MCF 10A (cell line): ENCODE measurements at regions of chr7 and their contacts with region 1.

Region 1: DNA sequence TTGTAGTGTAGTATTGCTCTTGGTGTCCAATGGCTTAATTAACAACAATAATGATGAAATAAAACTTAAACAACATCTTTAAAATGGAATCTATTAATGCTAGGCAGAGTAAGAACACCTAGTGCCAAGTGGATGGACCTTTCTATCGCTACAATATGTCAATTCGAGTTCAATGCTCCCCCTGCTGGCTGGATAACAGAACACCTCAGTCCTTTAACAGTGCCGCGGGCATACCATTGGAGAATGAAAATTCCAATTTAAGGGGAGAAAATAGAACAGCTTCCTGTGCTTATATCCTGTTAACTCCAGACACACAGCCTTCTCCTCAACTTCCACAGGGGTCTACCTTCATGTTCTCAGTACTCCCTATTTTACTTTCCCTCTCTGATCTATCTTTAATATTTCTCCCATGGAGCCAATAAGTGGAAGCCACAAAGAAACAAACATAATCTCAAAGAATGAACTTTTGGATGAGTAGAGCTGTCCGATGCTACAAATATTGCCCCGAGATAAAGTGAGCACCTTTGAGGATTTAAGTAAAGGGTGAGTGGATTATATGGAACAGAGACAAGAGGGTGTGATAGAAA is 41.4 kb downstream of the COL1A2 start:
- DNase-seq: peak; percentile 84
- H3K4me3 Mint-ChIP-seq: no peak overlapping the region
- H3K27ac Mint-ChIP-seq: peak overlapping the region; percentile 20
- H3K4me1 Mint-ChIP-seq: peaks cover 6% of the 10 kb centered on the region
- H3K27me3 Mint-ChIP-seq: no peaks in the 10 kb centered on the region
- CTCF ChIP-seq: peak; percentile 86

Region 2: DNA sequence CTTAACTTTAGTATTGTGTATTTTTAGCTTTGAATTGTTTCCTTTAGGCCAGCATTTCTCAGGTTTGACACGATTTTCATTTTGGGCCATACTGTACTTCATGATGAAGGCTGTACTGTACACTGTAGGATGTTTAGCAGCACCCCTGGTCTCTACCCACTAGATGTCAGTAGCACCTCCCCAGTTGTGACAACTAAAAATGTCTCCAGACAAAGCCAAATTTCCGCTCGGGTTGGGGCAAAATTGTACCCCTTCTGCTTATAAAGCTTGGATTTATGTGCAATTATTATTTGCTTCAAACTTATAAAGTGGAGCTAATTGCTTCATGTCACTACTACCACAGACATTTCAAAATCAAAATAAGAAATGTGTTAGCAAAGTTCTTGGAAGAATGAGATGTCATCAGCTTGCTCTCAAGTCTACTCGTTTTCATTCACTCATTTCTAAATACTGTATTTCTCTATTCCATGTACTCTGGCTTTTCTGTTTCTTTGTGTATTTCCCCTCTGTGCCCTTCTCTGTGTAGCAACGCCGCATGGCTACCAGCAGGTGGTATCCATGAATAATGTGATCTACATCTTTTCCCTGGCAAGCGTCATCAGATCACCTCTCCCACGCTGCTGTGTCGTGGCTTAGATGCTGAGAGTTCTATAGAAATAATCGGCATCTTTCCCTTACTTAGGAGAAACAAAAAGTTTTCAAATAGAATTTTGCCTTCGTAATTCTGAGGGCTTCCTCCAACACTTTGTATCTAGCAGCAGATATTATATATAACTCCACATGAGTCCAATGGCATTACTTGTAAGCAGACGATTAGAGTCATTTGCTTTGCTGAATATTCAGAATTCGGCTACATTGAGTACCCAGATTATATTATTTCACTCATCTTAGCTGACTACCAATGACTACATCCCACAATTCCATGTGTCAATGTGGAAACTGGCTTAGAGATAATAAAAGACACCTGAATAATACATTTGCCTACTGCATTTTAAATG is 813.8 kb before region 1 on chr7:
- CTCF ChIA-PET with region 1: interaction called, 3 read pairs
- POLR2A ChIA-PET with region 1: no interaction called
- intact Hi-C with region 1: loop called (anchors 1 kb)
- DNase-seq: peak; percentile 41
- H3K4me3 Mint-ChIP-seq: no peak overlapping the region
- H3K27ac Mint-ChIP-seq: no peak overlapping the region
- H3K4me1 Mint-ChIP-seq: peaks cover 6% of the 10 kb centered on the region
- H3K27me3 Mint-ChIP-seq: peaks cover 91% of the 10 kb centered on the region
- CTCF ChIP-seq: peak; percentile 41

Region 3: GRCh38 chr7:93799750-93800357 is 636.3 kb before region 1 on chr7:
- CTCF ChIA-PET with region 1: interaction called, 4 read pairs
- POLR2A ChIA-PET with region 1: no interaction called
- intact Hi-C with region 1: loop called (anchors 5 kb)
- DNase-seq: peak; percentile 34
- H3K4me3 Mint-ChIP-seq: no peak overlapping the region
- H3K27ac Mint-ChIP-seq: no peak overlapping the region
- H3K4me1 Mint-ChIP-seq: peaks cover 6% of the 10 kb centered on the region
- H3K27me3 Mint-ChIP-seq: no peaks in the 10 kb centered on the region
- CTCF ChIP-seq: peak; percentile 56

Region 4: GRCh38 chr7:94295850-94296249 is 140.3 kb before region 1 on chr7:
- CTCF ChIA-PET with region 1: interaction called, 113 read pairs
- POLR2A ChIA-PET with region 1: no interaction called
- intact Hi-C with region 1: loop called (anchors 1 kb)
- DNase-seq: peak; percentile 38
- H3K4me3 Mint-ChIP-seq: no peak overlapping the region
- H3K27ac Mint-ChIP-seq: no peak overlapping the region
- H3K4me1 Mint-ChIP-seq: peaks cover 28% of the 10 kb centered on the region
- H3K27me3 Mint-ChIP-seq: no peaks in the 10 kb centered on the region
- CTCF ChIP-seq: peak; percentile 37

Region 5: GRCh38 chr7:94395141-94396036 is 40.7 kb before region 1 on chr7:
- CTCF ChIA-PET with region 1: interaction called, 14 read pairs
- POLR2A ChIA-PET with region 1: no interaction called
- intact Hi-C with region 1: loop called (anchors 1 kb)
- DNase-seq: peak; percentile 81
- H3K4me3 Mint-ChIP-seq: no peak overlapping the region
- H3K27ac Mint-ChIP-seq: no peak overlapping the region
- H3K4me1 Mint-ChIP-seq: no peaks in the 10 kb centered on the region
- H3K27me3 Mint-ChIP-seq: no peaks in the 10 kb centered on the region
- CTCF ChIP-seq: peak; percentile 65

Region 6: GRCh38 chr7:94423863-94424735 is 12.0 kb before region 1 on chr7:
- CTCF ChIA-PET with region 1: interaction called, 26 read pairs
- POLR2A ChIA-PET with region 1: no interaction called
- intact Hi-C with region 1: no loop called
- DNase-seq: peak; percentile 52
- H3K4me3 Mint-ChIP-seq: no peak overlapping the region
- H3K27ac Mint-ChIP-seq: peak overlapping the region; percentile 99
- H3K4me1 Mint-ChIP-seq: peaks cover 8% of the 10 kb centered on the region
- H3K27me3 Mint-ChIP-seq: no peaks in the 10 kb centered on the region
- CTCF ChIP-seq: no peak

Region 7: DNA sequence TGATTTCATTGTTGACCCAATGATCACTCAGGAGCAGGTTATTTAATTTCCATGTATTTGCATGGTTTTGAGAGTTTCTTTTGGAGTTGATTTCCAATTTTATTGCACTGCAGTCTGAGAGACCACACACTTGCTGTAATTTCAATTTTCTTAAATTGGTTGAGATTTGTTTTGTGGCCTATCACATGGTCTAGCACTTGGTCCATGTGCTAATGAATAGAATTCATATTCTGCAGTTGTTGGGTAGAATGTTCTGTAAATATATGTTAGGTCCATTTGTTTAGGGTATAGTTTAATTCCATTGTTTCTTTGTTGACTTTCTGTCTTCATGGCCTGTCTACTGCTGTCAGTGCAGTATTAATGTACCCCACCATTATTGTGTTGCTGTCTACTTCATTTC is 435.0 kb after region 1 on chr7:
- CTCF ChIA-PET with region 1: no interaction called
- POLR2A ChIA-PET with region 1: no interaction called
- intact Hi-C with region 1: no loop called
- DNase-seq: no peak
- H3K4me3 Mint-ChIP-seq: no peak overlapping the region
- H3K27ac Mint-ChIP-seq: peak overlapping the region; percentile 3
- H3K4me1 Mint-ChIP-seq: no peaks in the 10 kb centered on the region
- H3K27me3 Mint-ChIP-seq: no peaks in the 10 kb centered on the region
- CTCF ChIP-seq: no peak

Region 8: GRCh38 chr7:95690367-95690947 is 1254.3 kb after region 1 on chr7:
- CTCF ChIA-PET with region 1: interaction called, 3 read pairs
- POLR2A ChIA-PET with region 1: no interaction called
- intact Hi-C with region 1: loop called (anchors 5 kb)
- DNase-seq: peak; percentile 68
- H3K4me3 Mint-ChIP-seq: peak overlapping the region; percentile 13
- H3K27ac Mint-ChIP-seq: peak overlapping the region; percentile 46
- H3K4me1 Mint-ChIP-seq: peaks cover 22% of the 10 kb centered on the region
- H3K27me3 Mint-ChIP-seq: peaks cover 11% of the 10 kb centered on the region
- CTCF ChIP-seq: peak; percentile 69